ENCODE measurements at regions of chr3 and their contacts with region 1.

Region 1: DNA sequence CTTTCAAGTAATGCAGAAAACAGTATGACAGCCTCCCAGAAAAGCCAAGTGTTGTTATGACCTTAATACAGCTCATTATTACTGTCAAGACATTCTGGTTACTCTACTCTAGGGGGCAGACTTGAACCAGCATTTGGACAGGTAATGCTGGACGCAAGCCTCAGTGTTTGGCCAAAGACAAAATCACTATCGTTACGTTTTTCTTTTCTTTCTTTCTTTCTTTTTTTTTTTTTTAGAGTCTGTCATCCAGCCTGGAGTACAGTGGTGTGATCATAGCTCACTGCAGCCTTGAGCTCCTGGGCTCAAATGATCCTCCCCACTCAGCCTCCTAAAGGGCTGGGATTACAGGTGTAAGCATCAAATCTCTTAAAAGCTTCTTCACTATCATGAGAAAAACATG is 29.4 kb upstream of the TMEM45A start:
- DNase-seq: no peak
- H3K4me3 Mint-ChIP-seq: no peak overlapping the region
- H3K27ac Mint-ChIP-seq: no peak overlapping the region
- H3K4me1 Mint-ChIP-seq: peaks cover 11% of the 10 kb centered on the region
- H3K27me3 Mint-ChIP-seq: peaks cover 2% of the 10 kb centered on the region

Region 2: DNA sequence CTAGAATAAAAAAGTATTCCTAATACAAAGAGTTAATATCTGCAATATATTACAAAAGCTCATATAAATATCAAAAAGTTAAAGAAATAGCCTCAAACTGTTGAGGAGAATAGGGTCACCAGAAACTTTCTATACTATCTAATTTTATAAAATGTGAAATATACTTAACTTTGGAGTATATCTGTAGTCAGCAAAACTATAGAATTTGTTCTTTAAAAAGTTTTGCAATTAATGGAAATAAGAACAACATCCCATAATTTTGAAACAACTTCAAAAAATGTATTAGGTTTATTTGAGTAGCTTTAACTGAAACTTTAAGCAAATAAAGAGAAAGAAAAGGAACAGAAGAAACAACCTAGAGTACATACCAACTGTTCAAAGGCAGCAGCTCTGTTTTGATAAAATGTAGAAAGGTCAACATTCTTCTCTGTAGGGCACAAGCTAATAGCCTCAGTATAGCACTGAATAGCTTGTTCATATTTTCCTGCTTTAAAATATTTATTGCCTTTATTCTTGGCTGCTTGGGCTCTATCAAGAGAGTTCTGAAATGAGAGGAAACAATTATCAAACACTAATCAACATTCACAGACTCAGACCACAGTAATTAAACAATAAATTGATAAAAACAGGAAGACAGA is 76.4 kb before region 1 on chr3:
- intact Hi-C with region 1: no loop called
- DNase-seq: no peak
- H3K4me3 Mint-ChIP-seq: no peak overlapping the region
- H3K27ac Mint-ChIP-seq: no peak overlapping the region
- H3K4me1 Mint-ChIP-seq: peaks cover 11% of the 10 kb centered on the region
- H3K27me3 Mint-ChIP-seq: no peaks in the 10 kb centered on the region

Region 3: DNA sequence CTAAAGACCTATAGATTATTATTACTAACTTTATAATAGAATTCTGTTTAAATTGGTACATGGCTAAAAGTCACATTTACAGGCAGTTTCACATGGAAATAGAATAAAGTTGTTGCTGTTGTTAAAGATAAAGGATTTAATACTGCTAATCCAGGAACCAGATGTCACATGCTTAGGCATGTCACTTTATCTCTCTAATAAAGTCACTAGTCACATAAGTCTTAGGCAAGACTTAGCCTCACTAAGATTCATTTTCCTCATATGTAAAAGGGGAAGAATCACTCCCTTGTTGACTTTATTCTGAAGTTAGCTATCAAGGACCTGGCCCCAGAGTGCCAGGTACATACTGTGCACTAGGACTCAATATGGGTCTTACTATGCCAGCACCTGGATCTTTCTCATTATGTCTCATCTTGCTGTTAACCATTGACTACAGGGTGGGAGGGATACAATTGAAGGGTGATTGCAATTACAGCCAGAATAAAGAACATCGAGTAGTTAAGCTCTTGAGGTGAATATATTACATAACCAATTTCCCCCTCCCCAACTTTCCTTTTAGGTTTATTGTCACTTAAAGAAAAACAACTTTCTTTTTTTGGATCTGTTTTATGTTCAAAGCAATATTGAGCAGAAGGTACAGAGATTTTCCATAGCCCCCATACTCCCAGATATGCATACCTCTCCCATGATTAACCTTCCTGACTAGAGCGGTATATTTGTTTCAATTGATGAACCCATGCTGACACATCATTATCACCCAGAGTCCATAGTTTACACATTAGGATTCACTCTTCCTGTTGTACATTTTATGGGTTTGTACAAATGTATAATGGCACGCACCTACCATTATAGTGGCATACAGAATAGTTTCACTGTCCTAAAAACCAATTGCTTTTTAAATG is 25.0 kb before region 1 on chr3:
- intact Hi-C with region 1: no loop called
- DNase-seq: no peak
- H3K4me3 Mint-ChIP-seq: no peak overlapping the region
- H3K27ac Mint-ChIP-seq: no peak overlapping the region
- H3K4me1 Mint-ChIP-seq: peaks cover 9% of the 10 kb centered on the region
- H3K27me3 Mint-ChIP-seq: no peaks in the 10 kb centered on the region

Region 4: DNA sequence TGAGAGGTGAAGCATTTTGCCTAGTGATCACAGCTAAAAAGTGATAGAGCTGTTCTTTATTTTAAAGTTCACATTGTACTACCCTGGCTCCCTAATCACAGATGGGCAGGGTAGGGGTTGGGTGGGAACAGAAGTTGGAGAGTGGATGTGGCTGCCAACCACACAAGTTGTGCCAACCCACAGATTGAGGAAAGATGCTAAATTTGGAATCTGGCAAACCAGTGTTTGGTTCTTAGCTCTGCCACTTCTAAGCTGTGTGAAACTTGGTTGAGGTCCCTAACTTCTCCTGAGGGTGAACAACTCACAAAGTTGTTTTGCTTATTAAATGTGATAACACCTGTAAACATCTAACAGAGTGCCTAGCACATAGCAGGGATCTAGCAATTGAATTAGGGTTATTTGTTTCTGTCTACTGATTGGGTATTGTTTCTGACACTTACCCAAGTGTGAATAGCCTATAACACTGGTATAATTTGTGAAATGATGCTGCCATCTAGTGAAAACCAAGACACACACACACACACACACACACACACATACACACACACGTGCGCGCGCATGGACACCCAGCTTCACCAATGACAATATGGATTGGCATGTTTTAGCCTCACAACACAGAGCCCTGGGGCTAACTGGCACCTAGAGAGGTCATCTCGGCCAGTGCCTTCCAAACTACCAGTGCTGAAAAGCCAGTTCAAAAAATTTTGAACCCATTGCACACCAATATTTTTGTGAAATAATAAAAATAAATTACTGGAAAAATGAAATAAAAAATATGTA is 171.7 kb after region 1 on chr3:
- intact Hi-C with region 1: loop called (anchors 1 kb)
- DNase-seq: peak; percentile 2
- H3K4me3 Mint-ChIP-seq: no peak overlapping the region
- H3K27ac Mint-ChIP-seq: no peak overlapping the region
- H3K4me1 Mint-ChIP-seq: peaks cover 9% of the 10 kb centered on the region
- H3K27me3 Mint-ChIP-seq: peaks cover 21% of the 10 kb centered on the region

Region 5: DNA sequence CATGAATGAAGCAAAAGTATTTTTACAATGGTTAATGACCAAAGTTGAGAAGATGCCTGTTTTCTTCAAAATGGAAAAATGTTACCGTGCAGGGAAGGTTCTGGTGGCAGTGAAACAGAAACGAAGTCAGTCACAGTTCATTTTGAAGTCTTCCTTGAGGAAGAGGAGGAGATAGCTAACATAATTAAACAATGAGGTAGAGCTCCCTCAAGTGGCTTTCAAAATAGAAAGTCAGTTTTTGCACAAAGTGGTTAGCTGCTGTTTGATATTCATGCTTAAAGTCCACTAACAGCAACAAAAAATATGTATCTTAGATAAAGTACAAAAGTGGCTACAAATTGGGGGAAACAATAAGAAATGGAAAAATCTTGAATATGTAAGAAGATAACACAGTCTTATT is 333.6 kb after region 1 on chr3:
- intact Hi-C with region 1: loop called (anchors 2 kb)
- DNase-seq: no peak
- H3K4me3 Mint-ChIP-seq: no peak overlapping the region
- H3K27ac Mint-ChIP-seq: no peak overlapping the region
- H3K4me1 Mint-ChIP-seq: peaks cover 5% of the 10 kb centered on the region
- H3K27me3 Mint-ChIP-seq: peaks cover 4% of the 10 kb centered on the region

Region 6: GRCh38 chr3:101635954-101636798 is 1173.2 kb after region 1 on chr3:
- intact Hi-C with region 1: loop called (anchors 10 kb)
- DNase-seq: peak; percentile 56
- H3K4me3 Mint-ChIP-seq: no peak overlapping the region
- H3K27ac Mint-ChIP-seq: no peak overlapping the region
- H3K4me1 Mint-ChIP-seq: no peaks in the 10 kb centered on the region
- H3K27me3 Mint-ChIP-seq: peaks cover 4% of the 10 kb centered on the region